Dendritic cell treated with granulocyte-macrophage colony-stimulating factor and Interleukin-4, amounts not matched to agents 40 ng/mL and 50 ng/mL, for 4 days (primary cell): ENCODE measurements at regions of chr3 and their contacts with region 1.

Region 1: GRCh38 chr3:143135150-143135549 is 15.6 kb downstream of the CHST2 start:
- H3K4me3 Mint-ChIP-seq: no peak overlapping the region
- H3K27ac Mint-ChIP-seq: peak overlapping the region; percentile 65
- H3K4me1 Mint-ChIP-seq: peaks cover 44% of the 10 kb centered on the region
- H3K27me3 Mint-ChIP-seq: no peaks in the 10 kb centered on the region

Region 2: DNA sequence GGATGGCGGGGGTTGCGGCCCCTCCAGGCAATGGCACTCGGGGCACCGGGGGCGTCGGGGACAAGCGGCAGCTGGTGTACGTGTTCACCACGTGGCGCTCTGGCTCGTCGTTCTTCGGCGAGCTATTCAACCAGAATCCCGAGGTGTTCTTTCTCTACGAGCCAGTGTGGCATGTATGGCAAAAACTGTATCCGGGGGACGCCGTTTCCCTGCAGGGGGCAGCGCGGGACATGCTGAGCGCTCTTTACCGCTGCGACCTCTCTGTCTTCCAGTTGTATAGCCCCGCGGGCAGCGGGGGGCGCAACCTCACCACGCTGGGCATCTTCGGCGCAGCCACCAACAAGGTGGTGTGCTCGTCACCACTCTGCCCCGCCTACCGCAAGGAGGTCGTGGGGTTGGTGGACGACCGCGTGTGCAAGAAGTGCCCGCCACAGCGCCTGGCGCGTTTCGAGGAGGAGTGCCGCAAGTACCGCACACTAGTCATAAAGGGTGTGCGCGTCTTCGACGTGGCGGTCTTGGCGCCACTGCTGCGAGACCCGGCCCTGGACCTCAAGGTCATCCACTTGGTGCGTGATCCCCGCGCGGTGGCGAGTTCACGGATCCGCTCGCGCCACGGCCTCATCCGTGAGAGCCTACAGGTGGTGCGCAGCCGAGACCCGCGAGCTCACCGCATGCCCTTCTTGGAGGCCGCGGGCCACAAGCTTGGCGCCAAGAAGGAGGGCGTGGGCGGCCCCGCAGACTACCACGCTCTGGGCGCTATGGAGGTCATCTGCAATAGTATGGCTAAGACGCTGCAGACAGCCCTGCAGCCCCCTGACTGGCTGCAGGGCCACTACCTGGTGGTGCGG is 13.7 kb before region 1 on chr3:
- intact Hi-C with region 1: no loop called
- H3K4me3 Mint-ChIP-seq: peak overlapping the region; percentile 84
- H3K27ac Mint-ChIP-seq: peak overlapping the region; percentile 17
- H3K4me1 Mint-ChIP-seq: peaks cover 48% of the 10 kb centered on the region
- H3K27me3 Mint-ChIP-seq: peaks cover 23% of the 10 kb centered on the region

Region 3: DNA sequence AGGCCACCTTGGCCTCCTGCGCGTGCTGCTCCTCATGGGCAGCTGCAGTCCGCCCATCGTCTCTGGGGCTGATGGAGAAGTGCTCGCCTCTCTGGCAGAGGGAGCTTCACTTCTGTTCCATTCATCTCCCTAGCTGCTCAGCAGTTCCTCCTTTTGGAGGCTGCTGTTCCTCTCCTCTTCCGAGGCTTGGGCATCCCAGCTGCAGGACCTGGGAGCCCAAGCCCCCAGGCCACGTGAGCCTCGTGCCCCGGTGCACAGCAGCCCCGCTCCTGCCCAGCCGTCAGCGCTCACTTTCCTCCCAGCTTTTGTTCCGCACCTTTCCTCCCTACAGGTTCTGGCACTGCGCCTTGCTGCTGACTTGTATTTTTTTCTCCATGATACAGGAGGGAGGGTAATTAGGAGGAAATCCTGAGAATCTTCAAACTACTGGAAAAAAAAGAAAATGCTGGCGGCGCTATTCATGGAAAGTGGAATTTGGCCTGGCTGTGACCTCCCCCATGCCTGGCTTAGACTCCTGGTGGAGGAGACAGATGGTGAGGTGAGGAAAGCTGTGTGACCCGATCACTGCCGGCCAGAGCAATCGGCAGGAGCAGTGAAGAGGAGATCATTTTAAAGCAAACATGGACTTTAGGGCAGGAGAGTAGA is 194.5 kb after region 1 on chr3:
- intact Hi-C with region 1: loop called (anchors 10 kb)
- H3K4me3 Mint-ChIP-seq: no peak overlapping the region
- H3K27ac Mint-ChIP-seq: no peak overlapping the region
- H3K4me1 Mint-ChIP-seq: peaks cover 38% of the 10 kb centered on the region
- H3K27me3 Mint-ChIP-seq: peaks cover 16% of the 10 kb centered on the region

Region 4: GRCh38 chr3:145006271-145006670 is 1871.1 kb after region 1 on chr3:
- intact Hi-C with region 1: no loop called
- H3K4me3 Mint-ChIP-seq: no peak overlapping the region
- H3K27ac Mint-ChIP-seq: no peak overlapping the region
- H3K4me1 Mint-ChIP-seq: no peaks in the 10 kb centered on the region
- H3K27me3 Mint-ChIP-seq: no peaks in the 10 kb centered on the region